ENCODE measurements at regions of chr5 and their contacts with region 1.

Region 1: GRCh38 chr5:37319037-37319782 is 51.7 kb downstream of the NUP155 start:
- DNase-seq: no peak
- ATAC-seq: no peak
- H3K4me3 Mint-ChIP-seq: no peak overlapping the region
- H3K27ac Mint-ChIP-seq: no peak overlapping the region
- H3K4me1 Mint-ChIP-seq: peaks cover 2% of the 10 kb centered on the region
- H3K27me3 Mint-ChIP-seq: no peaks in the 10 kb centered on the region

Region 2: GRCh38 chr5:36739751-36740221 is 579.4 kb before region 1 on chr5:
- CTCF ChIA-PET with region 1: no interaction called
- POLR2A ChIA-PET with region 1: no interaction called
- intact Hi-C with region 1: loop called in 1 of 2 experiments (anchors 10 kb)
- DNase-seq: peak; percentile 86
- ATAC-seq: peak; percentile 85
- H3K4me3 Mint-ChIP-seq: no peak overlapping the region
- H3K27ac Mint-ChIP-seq: no peak overlapping the region
- H3K4me1 Mint-ChIP-seq: peaks cover 8% of the 10 kb centered on the region
- H3K27me3 Mint-ChIP-seq: peaks cover 31% of the 10 kb centered on the region

Region 3: DNA sequence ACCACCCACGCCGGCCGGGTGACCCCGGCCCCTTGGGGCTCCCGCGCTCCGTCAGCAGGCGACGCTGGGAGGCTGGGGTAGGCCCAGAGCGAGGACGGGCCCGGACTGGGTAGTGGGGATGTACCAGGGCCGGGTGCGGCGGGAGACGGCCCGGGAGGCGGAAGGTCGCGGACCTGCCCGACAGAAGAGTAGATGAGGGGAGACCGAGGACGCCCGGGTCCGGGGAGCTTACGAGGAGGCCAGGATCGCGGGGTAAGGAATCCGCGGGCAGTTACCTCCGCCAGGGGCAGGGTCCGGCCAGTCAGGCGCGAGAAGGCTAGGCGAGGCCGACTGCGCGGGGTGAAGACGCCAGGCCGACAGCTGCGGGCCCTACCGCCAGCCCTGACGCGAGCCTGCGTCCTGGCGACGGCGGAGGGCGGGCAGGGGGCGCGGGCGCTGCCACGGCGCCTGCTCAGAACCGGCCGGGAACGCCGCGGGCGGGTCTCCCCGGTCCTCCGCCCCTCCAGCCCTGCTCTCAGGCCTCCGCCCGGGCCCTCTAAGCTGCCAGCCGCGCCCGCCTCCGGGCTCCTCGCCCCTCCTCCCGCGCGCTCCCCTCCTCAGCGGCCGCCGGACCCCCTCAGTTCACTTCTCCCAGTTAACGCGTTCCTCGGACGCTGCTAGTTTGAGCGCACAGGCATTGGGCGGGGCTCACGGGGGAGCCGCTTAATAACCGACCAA is 70.1 kb before region 1 on chr5 and contains the start of gene CPLANE1:
- CTCF ChIA-PET with region 1: no interaction called
- POLR2A ChIA-PET with region 1: interaction called, 10 read pairs
- intact Hi-C with region 1: no loop called
- DNase-seq: peak; percentile 72
- ATAC-seq: peak; percentile 91
- H3K4me3 Mint-ChIP-seq: peak within 1 kb of the TSS; percentile 75
- H3K27ac Mint-ChIP-seq: peak within 1 kb of the TSS; percentile 72
- H3K4me1 Mint-ChIP-seq: peaks cover 6% of the 10 kb centered on the region
- H3K27me3 Mint-ChIP-seq: no peaks in the 10 kb centered on the region
- total RNA-seq, gene CPLANE1: 6.2 to 7.4 TPM

Region 4: GRCh38 chr5:37370864-37371726 is 51.9 kb after region 1 on chr5 and contains the start of gene NUP155:
- CTCF ChIA-PET with region 1: no interaction called
- POLR2A ChIA-PET with region 1: no interaction called
- intact Hi-C with region 1: loop called in 1 of 2 experiments (anchors 2 kb)
- DNase-seq: peak; percentile 95
- ATAC-seq: peak; percentile 95
- H3K4me3 Mint-ChIP-seq: peak within 1 kb of the TSS; percentile 98
- H3K27ac Mint-ChIP-seq: peak within 1 kb of the TSS; percentile 99
- H3K4me1 Mint-ChIP-seq: peaks cover 35% of the 10 kb centered on the region
- H3K27me3 Mint-ChIP-seq: no peaks in the 10 kb centered on the region
- total RNA-seq, gene NUP155: 94.9 to 113 TPM

Region 5: GRCh38 chr5:37391591-37391990 is 72.4 kb after region 1 on chr5:
- CTCF ChIA-PET with region 1: no interaction called
- POLR2A ChIA-PET with region 1: no interaction called
- intact Hi-C with region 1: no loop called
- DNase-seq: no peak
- ATAC-seq: no peak
- H3K4me3 Mint-ChIP-seq: no peak overlapping the region
- H3K27ac Mint-ChIP-seq: no peak overlapping the region
- H3K4me1 Mint-ChIP-seq: no peaks in the 10 kb centered on the region
- H3K27me3 Mint-ChIP-seq: no peaks in the 10 kb centered on the region